ENCODE measurements at regions of chr18 and their contacts with region 1.

Region 1: DNA sequence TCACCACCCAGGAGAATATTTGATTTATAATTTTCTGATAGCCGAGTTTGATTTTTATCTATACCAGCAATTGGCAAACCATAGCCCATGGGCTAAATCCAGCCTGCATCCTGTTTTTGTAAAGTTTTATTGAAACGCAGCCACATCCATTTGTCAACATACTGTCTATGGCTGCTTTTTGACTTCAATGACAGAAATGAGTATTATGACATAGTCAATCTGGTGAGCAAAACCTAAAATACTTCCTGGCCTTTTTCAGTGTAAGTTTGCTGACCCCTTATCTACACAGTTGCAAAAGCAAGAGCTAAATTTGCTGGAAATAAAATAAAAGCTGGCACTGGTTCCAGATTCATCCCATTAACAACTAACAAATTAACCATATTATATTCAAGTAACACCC is 79.8 kb upstream of the SLC25A52 start:
- DNase-seq: no peak
- H3K4me3 Mint-ChIP-seq: no peak overlapping the region
- H3K27ac Mint-ChIP-seq: no peak overlapping the region
- H3K4me1 Mint-ChIP-seq: no peaks in the 10 kb centered on the region
- H3K27me3 Mint-ChIP-seq: no peaks in the 10 kb centered on the region

Region 2: GRCh38 chr18:31819106-31819924 is 21.2 kb before region 1 on chr18:
- CTCF ChIA-PET with region 1: no interaction called
- POLR2A ChIA-PET with region 1: no interaction called
- DNase-seq: peak; percentile 29
- H3K4me3 Mint-ChIP-seq: no peak overlapping the region
- H3K27ac Mint-ChIP-seq: no peak overlapping the region
- H3K4me1 Mint-ChIP-seq: no peaks in the 10 kb centered on the region
- H3K27me3 Mint-ChIP-seq: peaks cover 6% of the 10 kb centered on the region

Region 3: GRCh38 chr18:31892936-31893335 is 52.4 kb after region 1 on chr18:
- CTCF ChIA-PET with region 1: interaction called, 4 read pairs
- POLR2A ChIA-PET with region 1: interaction called, 12 read pairs
- DNase-seq: no peak
- H3K4me3 Mint-ChIP-seq: no peak overlapping the region
- H3K27ac Mint-ChIP-seq: no peak overlapping the region
- H3K4me1 Mint-ChIP-seq: no peaks in the 10 kb centered on the region
- H3K27me3 Mint-ChIP-seq: no peaks in the 10 kb centered on the region

Measured in activated CD4-positive, alpha-beta T cell treated with anti-CD3 and anti-CD28 coated beads, Interleukin-2, amount 10 ng/mL, durations not matched to agents 7 days and 5 days (primary cell).